Dorsolateral prefrontal cortex (tissue), 120 donors: ENCODE measurements at regions of chr4 and their contacts with region 1.

Region 1: DNA sequence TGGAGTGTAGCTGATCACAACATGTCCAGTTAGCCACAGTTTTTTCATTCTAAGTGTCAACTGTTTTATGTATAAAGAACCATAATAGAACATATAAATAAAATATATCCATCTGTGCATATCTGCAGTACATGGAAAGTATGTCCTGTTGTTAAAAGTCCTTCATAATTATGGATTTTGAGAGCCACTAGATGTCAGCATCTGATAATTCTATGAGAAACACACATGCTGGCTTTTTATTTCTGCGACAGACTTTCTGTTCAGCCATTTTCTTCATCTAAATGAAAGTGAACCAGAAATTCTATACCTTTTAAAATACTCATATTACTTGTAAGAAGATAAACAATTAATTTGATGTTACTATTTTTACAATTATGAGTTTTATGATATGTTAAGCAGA is 251.5 kb downstream of the GPM6A start:
- DNase-seq: no peak
- H3K4me3 ChIP-seq: peak overlapping the region in 4 of 59 donors; percentile 0 to 28 (median 14)
- H3K27ac ChIP-seq: peak overlapping the region in 52 of 59 donors; percentile 22 to 88 (median 75)
- H3K27me3 ChIP-seq: no peaks in the 10 kb centered on the region
- CTCF ChIP-seq: peak; percentile 49 to 84 (median 65)

Region 2: DNA sequence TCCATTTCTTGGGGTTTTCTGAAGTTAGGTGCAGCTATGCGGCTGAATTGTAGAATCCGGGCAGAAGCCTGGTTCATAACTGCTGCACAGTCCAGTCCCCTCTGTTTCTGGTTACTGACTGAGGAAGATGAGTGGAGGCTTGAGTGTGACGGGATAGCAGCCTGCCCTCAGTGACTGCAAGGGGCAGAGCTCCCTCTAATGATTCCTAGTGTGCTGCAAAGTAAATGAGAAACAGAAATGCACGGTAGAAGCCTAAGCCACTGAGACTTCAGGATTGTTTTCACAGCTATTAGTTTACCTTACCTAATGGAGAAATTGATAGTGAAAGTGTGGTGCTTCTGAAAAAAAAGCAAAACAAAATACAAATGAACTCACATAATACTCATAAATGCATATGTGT is 62.3 kb after region 1 on chr4:
- intact Hi-C with region 1: loop called in 1 of 2 experiments (anchors 5 kb)
- DNase-seq: peak in 1 of 10 donors; percentile 18
- H3K4me3 ChIP-seq: no peak overlapping the region
- H3K27ac ChIP-seq: peak overlapping the region in 46 of 59 donors; percentile 3 to 80 (median 48)
- H3K27me3 ChIP-seq: no peaks in the 10 kb centered on the region
- CTCF ChIP-seq: peak in 3 of 56 donors; percentile 10 to 23 (median 15)

Region 3: DNA sequence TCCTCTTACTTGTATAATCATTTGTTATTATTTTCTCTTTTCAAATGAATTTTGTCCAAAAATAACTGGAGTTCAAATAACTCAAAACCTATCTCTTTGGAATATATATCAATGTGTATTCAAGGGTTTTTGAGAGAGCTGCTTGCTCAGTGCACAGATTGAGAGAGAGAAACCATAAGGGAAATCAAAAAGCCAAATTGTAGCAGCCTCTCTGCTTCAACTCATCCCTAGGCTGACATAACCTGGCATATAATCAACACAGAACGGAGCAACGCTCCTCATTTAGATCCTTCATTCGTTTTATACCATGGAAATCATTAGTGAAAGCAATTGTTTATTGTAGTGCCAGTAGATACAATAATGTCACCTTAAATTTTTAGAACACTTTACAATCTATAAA is 253.2 kb after region 1 on chr4:
- intact Hi-C with region 1: loop called in 1 of 2 experiments (anchors 5 kb)
- DNase-seq: no peak
- H3K4me3 ChIP-seq: peak overlapping the region in 46 of 59 donors; percentile 4 to 73 (median 57)
- H3K27ac ChIP-seq: peak overlapping the region in 58 of 59 donors; percentile 30 to 99 (median 88)
- H3K27me3 ChIP-seq: peaks cover 0 to 41% (median 0%) of the 10 kb centered on the region in 45 donors
- CTCF ChIP-seq: no peak

Region 4: DNA sequence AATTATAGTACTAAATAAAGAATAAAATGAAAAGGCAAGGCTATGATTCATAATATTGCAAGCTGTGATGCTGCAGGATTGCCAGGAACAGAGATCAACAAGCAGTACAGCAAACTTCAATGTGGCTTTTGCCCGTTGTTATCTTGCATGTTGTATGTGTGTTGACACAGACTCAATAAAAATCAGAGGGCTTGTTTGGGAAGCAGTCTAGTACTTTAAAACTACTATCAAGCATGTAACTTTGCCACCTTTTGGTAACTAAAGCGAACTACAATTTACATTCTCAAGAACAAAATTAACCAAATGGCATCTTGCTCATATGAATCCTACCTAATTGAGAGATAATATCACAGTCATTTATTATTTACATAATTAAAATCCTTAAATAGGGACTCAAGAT is 331.2 kb after region 1 on chr4:
- intact Hi-C with region 1: loop called (anchors 5 kb)
- DNase-seq: no peak
- H3K4me3 ChIP-seq: peak overlapping the region in 16 of 59 donors; percentile 5 to 37 (median 16)
- H3K27ac ChIP-seq: peak overlapping the region in 44 of 59 donors; percentile 1 to 80 (median 54)
- H3K27me3 ChIP-seq: no peaks in the 10 kb centered on the region
- CTCF ChIP-seq: peak in 54 of 56 donors; percentile 12 to 67 (median 45)

Region 5: GRCh38 chr4:176044589-176044951 is 484.0 kb after region 1 on chr4:
- intact Hi-C with region 1: loop called in 1 of 2 experiments (anchors 5 kb)
- DNase-seq: peak; percentile 36 to 90 (median 74)
- H3K4me3 ChIP-seq: peak overlapping the region in 11 of 59 donors; percentile 2 to 33 (median 12)
- H3K27ac ChIP-seq: peak overlapping the region in 52 of 59 donors; percentile 1 to 86 (median 64)
- H3K27me3 ChIP-seq: no peaks in the 10 kb centered on the region
- CTCF ChIP-seq: no peak

Region 6: GRCh38 chr4:176340871-176341685 is 780.5 kb after region 1 on chr4:
- intact Hi-C with region 1: loop called in 1 of 2 experiments (anchors 5 kb)
- DNase-seq: no peak
- H3K4me3 ChIP-seq: peak overlapping the region in 45 of 59 donors; percentile 9 to 60 (median 44)
- H3K27ac ChIP-seq: peak overlapping the region in 1 of 59 donors; percentile 1
- H3K27me3 ChIP-seq: no peaks in the 10 kb centered on the region
- CTCF ChIP-seq: peak; percentile 35 to 90 (median 76)